Natural killer cell (primary cell): ENCODE measurements at regions of chr5 and their contacts with region 1.

Region 1: DNA sequence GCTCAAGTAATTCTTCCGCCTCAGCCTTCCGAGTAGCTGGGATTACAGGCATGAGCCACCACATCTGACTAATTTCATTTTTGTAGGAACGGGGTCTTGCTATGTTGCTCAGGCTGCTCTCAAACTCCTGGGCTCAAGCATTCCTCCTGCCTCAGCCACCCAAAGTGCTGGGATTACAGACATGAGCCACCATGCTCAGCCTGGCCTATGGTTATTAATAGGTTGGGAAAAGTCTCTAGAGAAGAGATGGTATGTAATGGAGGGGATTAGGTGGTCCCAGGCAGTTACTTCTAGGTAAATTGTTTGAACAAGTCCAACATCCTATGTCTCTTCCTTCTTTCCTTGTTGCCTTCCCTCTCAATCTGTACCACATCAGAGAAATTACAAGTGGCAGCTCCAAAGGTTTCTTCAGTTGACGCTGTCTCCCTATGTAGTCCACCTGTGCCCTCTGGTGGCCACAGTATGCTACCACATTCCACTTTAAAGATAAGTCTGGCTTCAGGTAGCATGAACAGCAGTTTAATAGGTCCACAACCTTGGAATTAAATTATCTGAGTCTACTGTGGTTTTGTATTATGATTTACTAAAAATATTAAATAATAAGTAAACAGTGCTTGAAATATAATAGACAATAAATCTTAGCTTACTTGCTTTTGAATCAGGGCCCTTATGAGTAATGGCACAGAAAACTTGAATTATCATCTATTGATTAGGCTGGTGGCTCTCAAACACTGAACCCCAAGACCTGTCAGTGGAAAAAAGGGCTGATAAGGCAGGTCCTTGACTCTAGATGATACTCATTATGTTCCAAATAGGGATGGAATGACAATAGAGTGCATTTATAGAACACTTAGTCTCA is 9.7 kb downstream of the TIGD6 start:
- DNase-seq: peak; percentile 48 to 85
- ATAC-seq: peak; percentile 84 to 100 (median 98)
- H3K4me3 ChIP-seq: no peak overlapping the region
- H3K4me3 Mint-ChIP-seq: no peak overlapping the region
- H3K27ac ChIP-seq: no peak overlapping the region
- H3K27ac Mint-ChIP-seq: no peak overlapping the region
- H3K4me1 ChIP-seq: no peaks in the 10 kb centered on the region
- H3K4me1 Mint-ChIP-seq: no peaks in the 10 kb centered on the region
- H3K27me3 ChIP-seq: no peaks in the 10 kb centered on the region
- H3K27me3 Mint-ChIP-seq: no peaks in the 10 kb centered on the region
- CTCF ChIP-seq: peak; percentile 92

Region 2: GRCh38 chr5:149636851-149637246 is 353.9 kb before region 1 on chr5:
- intact Hi-C with region 1: loop called (anchors 2 kb)
- DNase-seq: peak in 1 of 2 donors; percentile 80
- ATAC-seq: peak in 1 of 3 donors; percentile 82
- H3K4me3 ChIP-seq: no peak overlapping the region
- H3K4me3 Mint-ChIP-seq: no peak overlapping the region
- H3K27ac ChIP-seq: no peak overlapping the region
- H3K27ac Mint-ChIP-seq: no peak overlapping the region
- H3K4me1 ChIP-seq: no peaks in the 10 kb centered on the region
- H3K4me1 Mint-ChIP-seq: peaks cover 0 to 5% of the 10 kb centered on the region in 2 donors
- H3K27me3 ChIP-seq: no peaks in the 10 kb centered on the region
- H3K27me3 Mint-ChIP-seq: no peaks in the 10 kb centered on the region
- CTCF ChIP-seq: peak; percentile 83

Region 3: DNA sequence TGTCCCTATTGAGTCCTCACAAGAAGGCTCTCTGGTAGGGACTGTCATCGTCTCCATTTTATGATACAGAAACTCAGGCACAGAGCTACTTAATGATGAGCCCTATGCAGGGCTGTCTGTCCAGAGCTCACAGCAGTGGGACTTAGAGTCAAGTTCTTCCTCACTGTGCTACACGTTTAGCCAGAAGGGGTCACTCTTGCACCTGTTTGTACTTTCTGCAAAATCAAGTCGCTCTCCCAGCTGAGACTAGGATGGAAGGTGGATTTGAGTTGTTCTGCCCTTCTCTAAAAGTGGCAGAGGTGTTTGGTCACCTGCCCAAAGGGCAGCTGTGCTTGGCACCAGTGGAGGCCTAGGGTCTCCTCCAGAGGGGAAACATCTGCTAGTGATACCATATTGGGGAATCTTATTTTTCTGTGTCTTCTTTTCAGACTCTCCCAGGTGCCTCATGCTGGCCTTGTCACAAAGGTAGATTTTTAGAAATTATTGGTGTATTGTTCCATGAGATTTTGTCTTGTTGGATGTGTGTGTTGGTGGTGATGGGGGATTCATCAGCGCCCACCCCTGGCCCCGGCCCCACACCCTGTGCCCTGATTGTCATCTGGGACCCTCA is 156.4 kb before region 1 on chr5:
- intact Hi-C with region 1: loop called (anchors 1 kb)
- DNase-seq: peak; percentile 20 to 80
- ATAC-seq: peak; percentile 40 to 67 (median 63)
- H3K4me3 ChIP-seq: no peak overlapping the region
- H3K4me3 Mint-ChIP-seq: no peak overlapping the region
- H3K27ac ChIP-seq: no peak overlapping the region
- H3K27ac Mint-ChIP-seq: no peak overlapping the region
- H3K4me1 ChIP-seq: no peaks in the 10 kb centered on the region
- H3K4me1 Mint-ChIP-seq: no peaks in the 10 kb centered on the region
- H3K27me3 ChIP-seq: no peaks in the 10 kb centered on the region
- H3K27me3 Mint-ChIP-seq: no peaks in the 10 kb centered on the region
- CTCF ChIP-seq: peak; percentile 48

Region 4: GRCh38 chr5:150034662-150035061 is 43.9 kb after region 1 on chr5:
- intact Hi-C with region 1: no loop called
- DNase-seq: no peak
- ATAC-seq: no peak
- H3K4me3 ChIP-seq: no peak overlapping the region
- H3K4me3 Mint-ChIP-seq: no peak overlapping the region
- H3K27ac ChIP-seq: no peak overlapping the region
- H3K27ac Mint-ChIP-seq: no peak overlapping the region
- H3K4me1 ChIP-seq: no peaks in the 10 kb centered on the region
- H3K4me1 Mint-ChIP-seq: peaks cover 0 to 6% of the 10 kb centered on the region in 2 donors
- H3K27me3 ChIP-seq: no peaks in the 10 kb centered on the region
- H3K27me3 Mint-ChIP-seq: peaks cover 0 to 2% of the 10 kb centered on the region in 2 donors
- CTCF ChIP-seq: no peak

Region 5: GRCh38 chr5:150180241-150181026 is 189.7 kb after region 1 on chr5:
- intact Hi-C with region 1: no loop called
- DNase-seq: no peak
- ATAC-seq: no peak
- H3K4me3 ChIP-seq: no peak overlapping the region
- H3K4me3 Mint-ChIP-seq: no peak overlapping the region
- H3K27ac ChIP-seq: no peak overlapping the region
- H3K27ac Mint-ChIP-seq: no peak overlapping the region
- H3K4me1 ChIP-seq: no peaks in the 10 kb centered on the region
- H3K4me1 Mint-ChIP-seq: no peaks in the 10 kb centered on the region
- H3K27me3 ChIP-seq: no peaks in the 10 kb centered on the region
- H3K27me3 Mint-ChIP-seq: peaks cover 7 to 9% of the 10 kb centered on the region in 2 donors
- CTCF ChIP-seq: no peak